PC-9 (cell line): ENCODE measurements at regions of chr16 and their contacts with region 1.

Region 1: GRCh38 chr16:3317315-3317999 is 12.2 kb downstream of the ZNF75A start:
- DNase-seq: no peak
- H3K4me3 ChIP-seq: peak overlapping the region; percentile 5; the same call in 1 of the 2 replicates
- H3K27ac ChIP-seq: no peak overlapping the region
- H3K4me1 ChIP-seq: no peaks in the 10 kb centered on the region
- H3K27me3 ChIP-seq: no peaks in the 10 kb centered on the region
- CTCF ChIP-seq: no peak

Region 2: DNA sequence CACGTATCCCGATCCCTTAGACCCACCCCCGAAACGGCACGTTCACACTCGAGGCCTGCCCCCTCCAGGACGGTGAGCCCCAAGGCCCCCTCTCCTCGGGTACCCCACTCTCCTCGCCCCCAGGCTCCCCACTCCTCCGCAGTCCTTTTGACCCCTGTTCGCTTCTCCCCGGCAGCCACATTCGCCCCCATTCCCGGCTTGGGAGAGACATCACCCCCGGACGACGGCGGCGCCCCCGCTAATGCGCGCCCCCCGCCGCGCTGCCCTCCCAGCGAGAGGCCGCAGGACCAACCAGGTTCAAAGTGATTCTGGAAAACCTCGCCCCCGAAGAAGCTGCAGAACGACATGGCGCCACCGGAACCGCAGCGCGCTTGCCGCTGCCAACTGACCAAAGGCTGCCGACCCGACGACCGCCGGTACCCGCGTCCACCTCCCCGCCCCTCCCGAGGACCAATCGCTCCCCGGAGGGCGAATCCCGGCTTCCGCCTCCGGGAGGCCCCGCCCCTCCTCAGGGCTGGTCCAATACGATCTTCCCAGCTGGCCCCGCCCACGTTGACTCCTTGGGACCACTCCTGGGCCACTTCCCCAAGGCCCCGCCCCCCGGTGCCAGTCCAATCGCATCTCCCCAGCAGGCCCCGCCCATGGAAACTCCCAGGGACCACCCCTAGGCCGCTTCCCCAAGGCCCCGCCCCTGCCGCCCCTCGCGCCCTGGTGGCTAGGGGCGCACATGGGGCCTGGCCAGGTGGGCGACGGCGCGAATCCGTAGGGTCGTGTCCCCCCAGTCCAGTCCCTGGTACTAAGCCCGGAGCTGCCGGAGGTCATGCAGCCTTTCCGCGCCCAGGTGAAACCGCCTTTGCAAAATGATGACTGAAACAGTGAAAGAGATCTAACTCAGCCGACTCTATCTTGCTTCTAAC is 1374.4 kb before region 1 on chr16 and contains the start of gene MSRB1:
- CTCF ChIA-PET with region 1: no interaction called
- POLR2A ChIA-PET with region 1: no interaction called
- intact Hi-C with region 1: no loop called
- DNase-seq: peak; percentile 93 to 100
- H3K4me3 ChIP-seq: peak within 1 kb of the TSS; percentile 81
- H3K27ac ChIP-seq: peak within 1 kb of the TSS; percentile 61
- H3K4me1 ChIP-seq: peaks cover 18% of the 10 kb centered on the region
- H3K27me3 ChIP-seq: no peaks in the 10 kb centered on the region
- CTCF ChIP-seq: no peak
- total RNA-seq, gene MSRB1: 49.4 and 54.9 TPM in 2 replicates

Region 3: GRCh38 chr16:3348547-3349167 is 31.2 kb after region 1 on chr16:
- CTCF ChIA-PET with region 1: no interaction called
- POLR2A ChIA-PET with region 1: interaction called, 12 read pairs
- intact Hi-C with region 1: no loop called
- DNase-seq: no peak
- H3K4me3 ChIP-seq: no peak overlapping the region
- H3K27ac ChIP-seq: no peak overlapping the region
- H3K4me1 ChIP-seq: no peaks in the 10 kb centered on the region
- H3K27me3 ChIP-seq: peaks cover 64% of the 10 kb centered on the region
- CTCF ChIP-seq: no peak